ENCODE measurements at regions of chr9 and their contacts with region 1.

Region 1: DNA sequence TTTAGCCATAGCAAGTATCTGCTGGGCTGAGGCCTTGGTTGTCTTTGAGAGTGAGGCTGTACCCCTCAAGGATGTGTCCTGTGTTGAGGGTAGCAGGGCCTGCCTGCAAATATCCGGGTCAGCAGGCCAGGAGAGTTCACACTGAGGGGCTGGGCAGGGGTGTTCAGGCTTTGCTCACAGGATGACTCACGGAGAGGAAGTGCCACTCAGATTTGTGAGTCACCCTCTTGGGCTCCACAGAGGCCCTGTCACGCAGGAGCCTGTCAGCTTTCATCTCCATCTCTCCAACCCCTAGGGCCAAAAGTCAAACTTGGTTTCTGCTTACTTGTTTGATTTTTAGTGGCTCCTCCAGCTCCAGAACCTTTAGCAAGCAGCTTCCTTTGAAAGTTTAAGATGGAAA is 211.5 kb downstream of the SEC61B start:
- DNase-seq: peak; percentile 82
- ATAC-seq: peak; percentile 99
- H3K4me3 ChIP-seq: no peak overlapping the region
- H3K27ac ChIP-seq: peak overlapping the region; percentile 72
- H3K4me1 ChIP-seq: peaks cover 25% of the 10 kb centered on the region
- H3K27me3 ChIP-seq: no peaks in the 10 kb centered on the region
- CTCF ChIP-seq: no peak

Region 2: GRCh38 chr9:99235069-99235468 is 198.5 kb before region 1 on chr9:
- CTCF ChIA-PET with region 1: no interaction called
- POLR2A ChIA-PET with region 1: interaction called, 21 read pairs
- intact Hi-C with region 1: no loop called
- DNase-seq: no peak
- ATAC-seq: no peak
- H3K4me3 ChIP-seq: no peak overlapping the region
- H3K27ac ChIP-seq: no peak overlapping the region
- H3K4me1 ChIP-seq: no peaks in the 10 kb centered on the region
- H3K27me3 ChIP-seq: no peaks in the 10 kb centered on the region
- CTCF ChIP-seq: no peak

Region 3: DNA sequence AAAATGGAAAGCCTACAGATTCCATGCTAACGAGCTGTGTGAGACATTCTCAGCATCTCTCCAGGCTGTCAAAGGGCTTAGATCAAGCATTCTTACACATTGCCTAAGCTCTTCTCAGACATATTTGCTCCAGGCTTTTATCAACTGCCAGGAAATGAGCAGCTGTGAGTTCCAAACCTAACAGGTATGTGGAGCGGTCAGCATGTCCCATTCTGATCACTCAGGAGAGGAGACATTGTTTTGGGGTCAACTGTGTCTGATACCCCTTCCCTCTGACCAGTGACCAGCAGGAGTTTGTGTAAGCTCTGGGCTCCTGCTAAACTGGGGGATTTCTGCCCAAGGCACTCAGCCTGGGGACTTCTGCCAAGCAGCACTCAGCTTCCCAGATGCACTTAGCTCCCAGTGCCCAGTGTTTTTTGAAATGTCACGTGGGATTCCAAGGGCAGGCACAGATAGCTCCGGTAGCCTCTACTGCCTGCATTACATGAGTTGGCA is 17.6 kb after region 1 on chr9:
- CTCF ChIA-PET with region 1: no interaction called
- POLR2A ChIA-PET with region 1: no interaction called
- intact Hi-C with region 1: no loop called
- DNase-seq: no peak
- ATAC-seq: no peak
- H3K4me3 ChIP-seq: no peak overlapping the region
- H3K27ac ChIP-seq: no peak overlapping the region
- H3K4me1 ChIP-seq: no peaks in the 10 kb centered on the region
- H3K27me3 ChIP-seq: peaks cover 17% of the 10 kb centered on the region
- CTCF ChIP-seq: no peak

Region 4: DNA sequence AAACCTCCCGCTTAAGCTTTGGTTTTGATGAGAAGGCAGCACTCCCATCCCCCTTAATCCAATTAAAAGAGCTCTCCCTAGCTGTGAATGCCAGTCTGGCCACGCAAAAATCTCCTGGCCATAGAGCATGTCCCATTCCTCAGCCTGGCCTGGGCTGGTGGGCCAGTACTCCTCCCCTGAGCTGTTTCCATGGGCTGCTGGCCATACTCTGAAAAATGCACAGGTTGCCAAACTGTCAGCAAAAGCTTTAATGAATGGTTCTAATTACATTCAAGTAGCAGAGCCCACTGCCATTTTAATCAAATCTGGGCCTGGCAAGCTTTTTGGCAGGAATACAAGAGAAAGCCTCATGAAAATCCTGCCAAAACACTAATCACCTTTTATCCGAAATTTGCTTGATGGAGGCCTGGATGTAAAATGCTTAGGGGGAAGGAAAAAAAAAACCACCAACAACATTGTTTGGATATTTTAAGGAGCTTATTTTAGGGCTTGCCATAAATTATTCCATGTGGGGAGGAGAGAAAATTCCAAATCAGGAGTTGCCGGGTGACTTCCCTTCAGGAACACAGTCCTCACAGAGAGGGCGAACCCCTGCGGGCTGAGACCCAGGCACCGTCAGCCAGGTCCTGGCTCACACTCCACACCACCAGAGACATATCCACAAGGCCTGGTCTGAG is 31.8 kb after region 1 on chr9:
- CTCF ChIA-PET with region 1: no interaction called
- POLR2A ChIA-PET with region 1: no interaction called
- intact Hi-C with region 1: no loop called
- DNase-seq: no peak
- ATAC-seq: no peak
- H3K4me3 ChIP-seq: no peak overlapping the region
- H3K27ac ChIP-seq: no peak overlapping the region
- H3K4me1 ChIP-seq: no peaks in the 10 kb centered on the region
- H3K27me3 ChIP-seq: peaks cover 17% of the 10 kb centered on the region
- CTCF ChIP-seq: no peak

Region 5: DNA sequence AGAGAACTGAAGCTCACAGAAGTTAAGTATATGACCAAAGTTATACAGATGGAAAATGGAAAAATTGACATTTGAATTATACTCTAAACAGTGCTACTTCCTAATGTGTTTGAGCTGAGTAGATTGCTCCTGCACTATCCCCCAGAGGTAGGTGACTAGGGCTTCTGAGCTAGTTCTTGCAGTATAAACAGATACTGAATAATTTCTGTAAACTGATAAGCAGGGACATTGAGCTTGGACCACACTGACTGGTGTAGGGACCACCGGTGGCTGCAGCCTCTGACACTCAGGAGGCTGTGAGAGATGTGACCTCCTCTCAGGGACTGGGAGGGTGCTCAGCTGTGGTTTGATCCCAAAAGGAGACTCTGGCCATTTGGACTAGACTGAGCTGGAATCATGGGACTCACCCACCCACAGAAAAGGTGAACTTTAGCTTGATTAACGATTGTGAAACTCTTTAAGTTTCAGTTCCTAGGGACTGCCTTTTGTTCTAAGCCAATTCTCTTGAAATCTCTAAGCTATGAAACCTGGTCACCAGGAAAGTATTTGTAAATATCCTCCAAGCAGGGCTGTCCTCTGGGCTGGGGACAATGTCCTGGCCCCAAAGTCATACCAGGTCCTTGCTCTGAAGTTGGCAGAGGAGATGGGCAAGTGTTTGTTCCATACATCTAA is 80.0 kb after region 1 on chr9:
- CTCF ChIA-PET with region 1: no interaction called
- POLR2A ChIA-PET with region 1: no interaction called
- intact Hi-C with region 1: no loop called
- DNase-seq: no peak
- ATAC-seq: no peak
- H3K4me3 ChIP-seq: no peak overlapping the region
- H3K27ac ChIP-seq: no peak overlapping the region
- H3K4me1 ChIP-seq: no peaks in the 10 kb centered on the region
- H3K27me3 ChIP-seq: peaks cover 17% of the 10 kb centered on the region
- CTCF ChIP-seq: no peak

Region 6: GRCh38 chr9:99720455-99721050 is 287.0 kb after region 1 on chr9:
- CTCF ChIA-PET with region 1: no interaction called
- POLR2A ChIA-PET with region 1: no interaction called
- intact Hi-C with region 1: no loop called
- DNase-seq: no peak
- ATAC-seq: no peak
- H3K4me3 ChIP-seq: no peak overlapping the region
- H3K27ac ChIP-seq: no peak overlapping the region
- H3K4me1 ChIP-seq: no peaks in the 10 kb centered on the region
- H3K27me3 ChIP-seq: peaks cover 4% of the 10 kb centered on the region
- CTCF ChIP-seq: no peak

Measured in PC-3 (cell line).